ENCODE measurements at regions of chr10 and their contacts with region 1.

Region 1: GRCh38 chr10:52951824-52952223 is 179.2 kb upstream of the MBL2 start:
- DNase-seq: peak; percentile 59
- ATAC-seq: peak; percentile 89
- H3K4me3 ChIP-seq: no peak overlapping the region
- H3K27ac ChIP-seq: no peak overlapping the region
- H3K4me1 ChIP-seq: peaks cover 10% of the 10 kb centered on the region
- H3K27me3 ChIP-seq: peaks cover 0 to 7% of the 10 kb centered on the region in 2 experiments; a peak in 2 of 5 replicates
- CTCF ChIP-seq: peak; percentile 89
- EP300 ChIP-seq: no peak
- POLR2A ChIP-seq: no peak
- RAD21 ChIP-seq: peak; percentile 62

Region 2: GRCh38 chr10:52883996-52884871 is 67.6 kb before region 1 on chr10:
- CTCF ChIA-PET with region 1: no interaction called
- POLR2A ChIA-PET with region 1: no interaction called
- in situ Hi-C with region 1: no loop called
- intact Hi-C with region 1: loop called (anchors 2 kb)
- DNase-seq: peak; percentile 92
- ATAC-seq: peak; percentile 98
- H3K4me3 ChIP-seq: no peak overlapping the region; a peak in 1 of 6 replicates
- H3K27ac ChIP-seq: no peak overlapping the region
- H3K4me1 ChIP-seq: peaks cover 10% of the 10 kb centered on the region
- H3K27me3 ChIP-seq: no peaks in the 10 kb centered on the region; a peak in 1 of 5 replicates
- CTCF ChIP-seq: peak; percentile 87
- EP300 ChIP-seq: peak; percentile 43 to 58; a peak in 3 of 4 replicates
- POLR2A ChIP-seq: no peak
- RAD21 ChIP-seq: peak; percentile 75

Region 3: DNA sequence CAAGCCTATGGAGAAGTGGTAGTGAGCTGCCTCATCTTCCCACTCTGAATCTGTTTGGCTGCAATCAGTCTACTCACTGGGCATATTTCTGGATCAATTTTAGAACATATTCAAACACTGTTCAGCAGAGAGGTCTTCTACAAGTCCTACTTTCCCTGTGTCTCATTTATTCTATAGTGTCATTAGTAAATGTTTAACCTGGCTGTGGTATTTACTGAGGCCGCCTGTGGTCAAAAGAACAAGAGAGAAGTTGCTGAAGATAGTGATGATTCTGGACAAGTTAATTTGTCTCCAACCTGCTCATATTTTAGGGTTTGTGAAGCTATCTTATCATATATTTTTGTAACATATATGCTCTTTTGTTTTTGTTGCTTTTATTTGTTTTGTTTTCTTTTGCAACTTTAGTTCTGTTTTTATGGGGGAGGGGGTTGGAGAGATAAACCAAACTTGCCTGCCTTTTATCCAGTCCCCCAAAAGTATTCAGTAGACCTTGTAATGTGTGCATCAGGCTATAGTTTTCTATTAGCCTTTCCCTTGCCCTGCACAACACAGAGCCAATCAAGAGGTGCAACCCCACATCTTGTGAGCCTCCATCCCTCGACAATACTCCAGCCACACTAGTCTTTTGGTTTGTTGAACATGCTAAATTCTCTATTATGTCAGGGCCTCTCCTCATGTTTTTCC is 183.5 kb after region 1 on chr10:
- CTCF ChIA-PET with region 1: no interaction called
- POLR2A ChIA-PET with region 1: no interaction called
- in situ Hi-C with region 1: no loop called
- intact Hi-C with region 1: loop called (anchors 5 kb)
- DNase-seq: peak; percentile 39
- ATAC-seq: peak; percentile 92
- H3K4me3 ChIP-seq: peak overlapping the region in 1 of 3 experiments; percentile 20; a peak in 1 of 6 replicates
- H3K27ac ChIP-seq: no peak overlapping the region
- H3K4me1 ChIP-seq: peaks cover 23% of the 10 kb centered on the region
- H3K27me3 ChIP-seq: no peaks in the 10 kb centered on the region
- CTCF ChIP-seq: no peak
- EP300 ChIP-seq: no peak
- POLR2A ChIP-seq: no peak
- RAD21 ChIP-seq: no peak

Region 4: GRCh38 chr10:53276797-53277196 is 325.0 kb after region 1 on chr10:
- CTCF ChIA-PET with region 1: no interaction called
- POLR2A ChIA-PET with region 1: no interaction called
- in situ Hi-C with region 1: no loop called
- intact Hi-C with region 1: loop called (anchors 5 kb)
- DNase-seq: no peak
- ATAC-seq: no peak
- H3K4me3 ChIP-seq: no peak overlapping the region
- H3K27ac ChIP-seq: no peak overlapping the region
- H3K4me1 ChIP-seq: no peaks in the 10 kb centered on the region
- H3K27me3 ChIP-seq: no peaks in the 10 kb centered on the region
- CTCF ChIP-seq: no peak
- EP300 ChIP-seq: no peak
- POLR2A ChIP-seq: no peak
- RAD21 ChIP-seq: no peak

Measured in HepG2 (cell line).